Cardiac septum (tissue), 1 donor: ENCODE measurements at regions of chr3 and their contacts with region 1.

Region 1: DNA sequence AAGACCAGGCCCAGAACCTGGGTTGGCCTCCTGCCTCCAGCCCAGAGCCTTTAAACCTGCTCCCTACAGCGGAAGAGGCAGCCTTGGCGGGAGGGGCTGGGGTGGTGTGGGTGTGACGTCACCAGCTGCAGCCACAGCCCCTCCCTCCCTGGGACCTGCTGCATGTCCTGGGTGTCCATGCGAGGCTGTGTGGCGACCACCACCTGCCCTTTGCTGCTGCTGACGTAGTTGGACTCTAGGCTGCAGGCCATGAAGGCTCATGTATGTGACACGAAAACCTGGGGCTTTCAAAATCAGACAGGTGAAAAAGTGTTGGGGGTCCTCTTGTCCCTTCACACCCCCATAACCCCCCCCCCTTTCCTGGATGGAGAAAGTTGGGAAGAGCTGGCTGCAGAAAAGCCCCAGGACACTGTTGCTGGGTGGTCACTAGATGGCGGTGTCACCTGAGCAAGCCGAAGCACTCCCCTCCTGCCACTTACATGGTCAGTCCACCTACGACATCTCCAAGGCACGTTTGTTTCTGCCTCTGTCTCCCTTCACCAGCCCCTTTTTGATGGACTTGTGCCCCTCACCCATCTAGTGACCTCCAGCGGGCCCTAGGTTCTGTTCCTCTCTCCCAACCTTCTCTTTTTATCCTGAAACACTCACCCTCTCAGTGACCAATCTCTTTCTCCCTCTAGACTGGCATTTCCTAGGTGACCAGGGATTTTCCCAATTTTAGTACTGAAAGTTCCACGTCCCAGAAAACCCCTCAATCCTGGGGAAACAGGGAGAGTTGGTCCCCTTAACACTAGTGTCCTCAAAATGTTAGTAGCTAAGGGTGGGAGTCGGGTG is 35.2 kb downstream of the SLC6A20 start:
- DNase-seq: no peak

Region 2: GRCh38 chr3:45793482-45794176 is 32.5 kb after region 1 on chr3:
- intact Hi-C with region 1: no loop called
- DNase-seq: no peak

Region 3: GRCh38 chr3:45832691-45833090 is 71.6 kb after region 1 on chr3:
- intact Hi-C with region 1: loop called (anchors 5 kb)
- DNase-seq: no peak

Region 4: DNA sequence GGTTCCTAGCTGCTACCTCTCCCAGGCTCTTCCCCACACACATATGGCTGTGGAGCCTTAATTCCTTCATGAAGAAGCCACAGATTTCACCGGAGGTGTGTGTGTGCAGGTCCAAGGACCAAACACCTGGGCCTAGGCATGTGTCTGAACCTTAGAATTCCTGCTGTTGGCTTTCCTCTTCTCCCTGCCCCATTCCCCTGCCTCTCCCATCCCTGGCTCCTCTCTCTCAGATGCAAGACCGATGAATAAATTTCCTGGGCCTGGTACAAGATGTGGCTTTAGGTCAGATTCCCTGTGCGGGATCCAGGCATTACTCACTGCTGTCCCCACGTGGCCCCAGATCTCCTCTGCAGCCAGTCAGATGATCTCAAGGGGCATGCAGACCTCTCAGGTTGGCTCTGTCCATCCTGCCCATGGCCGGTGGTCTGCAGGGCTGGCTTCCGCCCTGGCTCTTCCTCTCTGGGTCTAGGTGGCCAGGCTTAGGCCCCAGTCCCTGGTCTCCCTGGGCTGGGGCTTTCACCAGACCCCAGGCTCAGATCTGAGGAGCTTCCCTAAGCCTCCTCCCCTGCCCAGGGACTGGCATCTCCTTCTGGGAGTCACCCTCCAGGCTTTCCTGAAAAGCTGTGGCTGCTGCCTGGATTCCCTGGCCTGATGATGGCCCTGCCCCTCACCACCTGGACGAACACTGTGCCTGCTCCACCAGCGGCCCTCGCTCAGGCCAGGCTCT is 145.7 kb after region 1 on chr3:
- intact Hi-C with region 1: loop called (anchors 5 kb)
- DNase-seq: peak; percentile 74

Region 5: DNA sequence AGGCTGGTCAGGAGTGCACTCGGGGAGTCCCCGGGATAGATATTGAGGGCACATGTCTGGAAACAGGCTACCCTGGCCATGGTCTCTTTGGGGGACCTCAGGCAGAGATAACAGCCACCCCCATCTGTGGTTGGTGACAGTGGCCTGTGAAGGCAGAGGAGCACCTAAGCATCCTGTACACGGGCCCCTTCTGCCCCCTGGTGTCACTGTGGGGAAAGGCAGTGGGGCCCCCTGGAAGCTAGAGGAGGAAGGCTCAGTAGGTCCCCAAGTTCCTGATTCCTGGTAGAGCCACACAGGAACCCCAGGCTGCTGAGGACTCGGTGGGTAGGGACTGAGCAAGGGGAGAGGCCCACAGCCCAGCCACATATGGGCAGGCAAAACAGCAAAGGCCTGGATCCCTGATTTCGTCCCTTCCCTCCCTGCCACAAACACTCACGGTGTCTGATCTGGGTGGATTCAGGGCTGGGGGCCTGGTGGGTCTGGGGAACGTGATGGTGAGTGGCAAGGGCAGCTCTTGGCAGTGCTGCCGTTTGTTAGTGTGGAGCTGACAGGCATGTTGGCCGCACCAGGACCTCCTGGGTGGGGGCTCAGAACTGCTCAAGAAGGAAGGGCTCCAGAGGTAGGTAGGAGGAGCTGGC is 168.1 kb after region 1 on chr3:
- intact Hi-C with region 1: loop called (anchors 5 kb)
- DNase-seq: peak; percentile 70

Region 6: GRCh38 chr3:46078712-46079400 is 317.8 kb after region 1 on chr3:
- intact Hi-C with region 1: loop called (anchors 2 kb)
- DNase-seq: peak; percentile 91